Activated T-helper 2 cell treated with anti-CD3 and anti-CD28 coated beads, Interferon-gamma antibody, Interleukin-2, Interleukin-4, amounts not matched to agents 10 μg/mL and 5 μg/mL and 100 μg/mL, durations not matched to agents 14 hours and 24 hours and 36 hours (primary cell): ENCODE measurements at regions of chr13 and their contacts with region 1.

Region 1: DNA sequence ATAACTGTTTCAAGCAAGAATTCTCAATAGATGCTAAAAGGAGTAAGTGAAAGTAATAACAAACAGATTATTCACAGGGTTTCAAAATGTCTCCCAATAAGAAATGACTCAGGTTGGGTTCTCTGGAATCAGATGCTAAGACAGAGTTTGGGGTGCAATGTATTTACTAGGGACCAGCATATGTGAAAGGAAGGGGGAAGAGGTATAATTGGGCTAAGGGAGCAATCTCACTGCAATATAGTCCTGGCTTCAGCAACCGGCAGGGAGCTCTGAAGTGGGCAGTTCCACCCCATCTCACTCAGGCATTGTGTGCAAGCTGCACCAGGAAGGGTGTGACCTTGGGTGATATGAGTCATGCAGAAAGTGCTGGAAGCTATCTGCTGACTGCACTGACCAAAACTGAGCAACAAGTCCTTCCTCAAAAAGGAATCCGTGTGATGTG is 23.4 kb downstream of the ZDHHC20 start:
- DNase-seq: peak; percentile 55
- H3K4me3 Mint-ChIP-seq: peak overlapping the region; percentile 1
- H3K27ac Mint-ChIP-seq: peak overlapping the region; percentile 55
- H3K4me1 Mint-ChIP-seq: peaks cover 31% of the 10 kb centered on the region
- H3K27me3 Mint-ChIP-seq: no peaks in the 10 kb centered on the region

Region 2: GRCh38 chr13:20997430-20998161 is 438.1 kb before region 1 on chr13:
- intact Hi-C with region 1: no loop called
- DNase-seq: no peak
- H3K4me3 Mint-ChIP-seq: no peak overlapping the region
- H3K27ac Mint-ChIP-seq: no peak overlapping the region
- H3K4me1 Mint-ChIP-seq: peaks cover 5% of the 10 kb centered on the region
- H3K27me3 Mint-ChIP-seq: peaks cover 6% of the 10 kb centered on the region

Region 3: DNA sequence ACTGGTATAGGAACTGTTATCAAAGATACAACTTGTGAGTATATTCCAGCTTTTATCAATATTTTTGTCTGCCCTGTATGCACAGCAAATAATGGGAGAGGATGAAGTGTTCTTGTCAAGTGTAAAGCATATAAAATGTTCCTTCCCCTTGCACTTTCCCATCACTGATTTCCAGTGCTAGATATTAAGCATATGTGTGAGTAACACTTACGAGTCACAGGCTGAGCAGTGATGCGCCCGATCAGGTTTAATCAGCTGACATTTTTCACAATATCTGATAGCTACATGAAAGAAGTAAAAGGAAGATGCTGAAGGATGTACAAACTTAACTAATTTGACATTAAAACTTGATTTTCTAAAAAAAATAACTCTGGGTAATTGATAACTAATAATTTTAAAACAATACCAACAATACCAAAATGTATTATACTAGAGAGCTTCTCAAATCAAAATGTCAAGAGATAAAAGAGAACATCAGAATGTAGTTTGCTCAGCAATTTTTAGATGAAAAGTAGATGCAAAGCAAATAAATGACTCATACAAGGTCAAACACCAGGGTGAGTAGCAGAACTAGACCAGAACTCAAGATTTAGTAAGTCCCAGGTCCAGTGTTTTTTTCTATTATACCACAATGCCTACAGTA is 33.0 kb before region 1 on chr13:
- intact Hi-C with region 1: loop called (anchors 5 kb)
- DNase-seq: no peak
- H3K4me3 Mint-ChIP-seq: no peak overlapping the region
- H3K27ac Mint-ChIP-seq: peak overlapping the region; percentile 59
- H3K4me1 Mint-ChIP-seq: peaks cover 25% of the 10 kb centered on the region
- H3K27me3 Mint-ChIP-seq: no peaks in the 10 kb centered on the region

Region 4: DNA sequence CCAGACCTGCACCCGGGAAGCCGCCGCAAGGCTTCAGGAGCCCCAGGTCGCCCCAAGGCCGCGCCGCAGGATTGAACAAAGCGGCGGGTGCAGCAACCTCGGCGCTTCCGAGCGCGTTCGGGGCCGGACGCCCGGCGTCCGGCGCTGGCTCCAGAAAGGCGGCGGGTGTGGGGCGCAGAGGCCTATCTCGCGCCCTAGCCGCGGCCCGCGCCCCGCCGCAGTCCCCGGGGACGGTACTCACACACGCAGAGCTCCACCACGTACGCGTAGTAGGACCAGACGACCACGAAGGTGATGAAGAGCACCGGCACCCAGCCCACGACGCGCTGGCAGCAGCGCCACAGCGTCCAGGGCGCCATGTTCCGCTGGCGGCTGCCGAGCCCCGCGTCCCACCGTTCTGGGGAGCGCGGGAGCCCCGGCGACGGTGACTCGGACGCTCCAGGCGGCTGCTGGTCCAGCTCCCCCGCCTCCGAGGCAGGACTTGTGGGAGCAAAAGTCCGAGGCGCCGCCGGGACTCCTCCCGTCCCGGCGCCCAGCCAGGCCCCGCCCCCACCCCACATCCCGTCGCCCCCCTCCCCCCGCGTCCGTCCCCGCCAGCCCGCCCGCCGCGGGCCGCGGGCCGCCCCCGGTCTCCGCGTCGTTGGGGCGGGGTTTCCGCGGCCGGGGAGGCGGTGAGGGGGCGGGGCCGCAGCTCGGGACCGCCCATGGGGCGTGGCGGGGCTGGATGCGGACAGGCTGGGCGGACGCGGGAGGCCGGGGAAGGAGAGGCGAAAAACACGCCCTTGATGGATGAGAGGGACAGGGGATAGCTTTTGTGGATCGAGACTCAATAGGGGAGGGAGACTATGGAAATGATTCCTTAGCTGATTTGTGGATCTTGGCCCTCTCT is 23.3 kb after region 1 on chr13 and contains the start of gene ZDHHC20:
- intact Hi-C with region 1: loop called (anchors 2 kb)
- DNase-seq: peak; percentile 85
- H3K4me3 Mint-ChIP-seq: peak within 1 kb of the TSS; percentile 92
- H3K27ac Mint-ChIP-seq: peak within 1 kb of the TSS; percentile 90
- H3K4me1 Mint-ChIP-seq: peaks cover 27% of the 10 kb centered on the region
- H3K27me3 Mint-ChIP-seq: no peaks in the 10 kb centered on the region
- total RNA-seq, gene ZDHHC20: 59.0 and 63.3 TPM in 2 replicates